A673 (cell line): ENCODE measurements at regions of chr10 and their contacts with region 1.

Region 1: DNA sequence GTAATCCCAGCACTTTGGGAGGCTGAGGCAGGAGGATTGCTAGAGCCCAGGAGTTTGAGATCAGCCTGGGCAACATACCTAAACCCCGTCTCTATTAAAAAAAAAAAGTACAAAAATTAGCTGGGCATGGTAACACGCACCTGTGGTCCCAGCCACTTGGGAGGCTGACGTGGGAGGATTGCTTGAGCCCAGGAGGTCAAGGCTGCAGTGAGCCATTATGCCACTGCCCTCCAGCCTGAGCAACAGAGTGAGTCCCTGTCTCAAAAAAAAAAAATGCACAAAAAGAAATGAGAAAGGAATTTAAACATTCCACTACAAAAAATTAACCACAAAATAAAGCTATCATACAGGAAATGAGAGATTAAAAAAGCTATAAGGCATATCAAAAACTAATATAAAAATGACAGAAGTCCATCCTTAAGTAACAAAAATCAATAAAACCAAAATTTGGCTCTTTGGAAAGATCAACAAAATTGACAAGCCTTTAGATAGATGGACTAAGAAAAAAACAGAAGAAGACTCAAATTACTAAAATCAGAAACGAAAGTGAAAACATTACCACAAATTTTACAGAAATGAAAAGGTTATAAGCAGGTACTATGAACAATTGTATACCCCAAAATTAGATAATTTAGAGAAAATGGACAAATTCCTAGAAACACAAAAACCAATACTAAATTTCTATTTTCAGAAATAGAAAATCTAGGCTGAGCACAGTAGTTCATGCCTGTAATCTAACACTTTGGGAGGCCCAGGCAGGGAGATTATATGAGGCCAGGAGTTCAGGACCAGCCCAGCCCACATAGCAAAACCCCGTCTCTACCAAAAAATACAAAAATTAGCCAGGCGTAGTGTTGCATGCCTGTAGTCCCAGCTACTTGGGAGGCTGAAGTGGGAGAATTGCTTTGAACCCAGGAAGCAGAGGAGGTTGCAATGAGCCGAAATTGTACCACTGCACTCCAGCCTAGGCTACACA is 42.4 kb upstream of the NANOS1 start:
- DNase-seq: no peak
- H3K4me3 ChIP-seq: no peak overlapping the region
- H3K27ac ChIP-seq: no peak overlapping the region
- H3K4me1 ChIP-seq: no peaks in the 10 kb centered on the region
- H3K27me3 ChIP-seq: no peaks in the 10 kb centered on the region
- CTCF ChIP-seq: no peak

Region 2: DNA sequence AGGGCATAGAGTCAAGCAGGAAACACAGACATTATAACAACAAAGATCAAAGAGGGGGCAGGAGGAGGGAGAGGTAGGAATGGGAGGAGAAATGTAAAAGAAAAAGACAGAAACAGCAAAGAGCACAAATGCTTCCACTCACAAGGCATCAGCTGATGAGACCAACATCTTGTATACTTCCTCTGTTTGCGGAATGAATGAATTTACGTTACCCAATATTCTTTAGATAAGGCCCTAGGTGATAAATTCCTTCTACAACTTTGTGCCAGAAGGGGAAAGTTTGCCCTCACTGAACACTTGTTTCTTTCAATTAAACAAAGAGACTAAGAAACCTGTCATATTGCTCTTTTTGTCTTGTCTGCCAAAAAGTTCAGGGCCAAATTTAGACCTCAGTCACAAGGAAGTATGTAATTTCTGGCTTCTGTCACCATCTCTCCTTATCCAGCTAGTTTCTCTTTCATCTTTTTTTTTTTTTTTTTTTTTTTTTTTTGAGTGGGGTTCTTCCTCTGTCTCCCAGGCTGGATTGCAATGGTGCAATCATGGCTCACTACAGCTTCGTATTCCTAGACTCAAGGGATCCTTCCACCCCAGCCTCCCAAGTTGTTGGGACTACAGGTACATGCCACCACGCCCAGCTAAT is 74.0 kb before region 1 on chr10:
- CTCF ChIA-PET with region 1: interaction called, 12 read pairs
- POLR2A ChIA-PET with region 1: no interaction called
- intact Hi-C with region 1: no loop called
- DNase-seq: no peak
- H3K4me3 ChIP-seq: no peak overlapping the region
- H3K27ac ChIP-seq: no peak overlapping the region
- H3K4me1 ChIP-seq: peaks cover 4% of the 10 kb centered on the region
- H3K27me3 ChIP-seq: peaks cover 29% of the 10 kb centered on the region
- CTCF ChIP-seq: no peak

Region 3: GRCh38 chr10:119596537-119597404 is 609.7 kb after region 1 on chr10 and contains the start of gene TIAL1:
- CTCF ChIA-PET with region 1: no interaction called
- POLR2A ChIA-PET with region 1: no interaction called
- intact Hi-C with region 1: no loop called
- DNase-seq: peak; percentile 100
- H3K4me3 ChIP-seq: peak within 1 kb of the TSS; percentile 80
- H3K27ac ChIP-seq: peak within 1 kb of the TSS; percentile 98
- H3K4me1 ChIP-seq: peaks cover 40% of the 10 kb centered on the region
- H3K27me3 ChIP-seq: no peaks in the 10 kb centered on the region
- CTCF ChIP-seq: no peak
- total RNA-seq, gene TIAL1: 176 and 199 TPM in 2 replicates